Uterus (tissue), 4 donors: ENCODE measurements at regions of chr17 and their contacts with region 1.

Region 1: DNA sequence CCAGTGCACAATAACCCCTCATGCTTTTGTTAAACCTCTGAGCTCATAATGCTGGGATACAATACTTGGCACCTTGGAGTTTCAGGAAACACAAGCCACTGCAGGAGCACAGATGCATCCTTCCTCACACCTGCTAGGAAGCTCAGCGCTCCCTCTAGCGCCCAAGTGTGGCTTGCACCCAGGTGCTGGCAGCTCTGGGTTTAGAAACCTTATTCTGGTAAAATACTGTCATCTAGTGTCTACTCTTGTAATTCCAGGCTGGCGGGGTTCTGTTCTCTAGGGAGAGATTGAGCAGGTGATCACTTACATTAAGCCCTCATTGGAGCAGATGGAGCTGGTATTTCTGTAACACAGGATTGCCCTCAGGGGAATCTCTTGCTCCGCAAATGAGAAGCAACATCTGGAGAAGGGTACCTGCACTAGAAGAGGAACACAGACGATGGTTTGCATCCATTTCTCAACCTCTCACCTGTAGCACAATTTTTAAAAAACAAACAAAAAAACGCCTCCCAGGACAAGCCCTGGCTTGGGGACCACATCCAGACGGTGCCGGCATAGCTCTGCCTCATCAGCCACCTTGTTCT is 1.5 kb downstream of the CCL1 start:
- DNase-seq: peak; percentile 87 to 90
- H3K4me3 ChIP-seq: no peak overlapping the region
- H3K27ac ChIP-seq: no peak overlapping the region
- H3K4me1 ChIP-seq: no peaks in the 10 kb centered on the region
- H3K27me3 ChIP-seq: no peaks in the 10 kb centered on the region
- CTCF ChIP-seq: peak; percentile 96 to 100 (median 99)
- POLR2A ChIP-seq: no peak

Region 2: GRCh38 chr17:34199932-34200534 is 161.5 kb before region 1 on chr17:
- intact Hi-C with region 1: loop called (anchors 5 kb)
- DNase-seq: peak; percentile 75 to 85
- H3K4me3 ChIP-seq: no peak overlapping the region
- H3K27ac ChIP-seq: no peak overlapping the region
- H3K4me1 ChIP-seq: no peaks in the 10 kb centered on the region
- H3K27me3 ChIP-seq: no peaks in the 10 kb centered on the region
- CTCF ChIP-seq: peak; percentile 99 to 100 (median 100)
- POLR2A ChIP-seq: no peak